ENCODE measurements at regions of chr9 and their contacts with region 1.

Region 1: DNA sequence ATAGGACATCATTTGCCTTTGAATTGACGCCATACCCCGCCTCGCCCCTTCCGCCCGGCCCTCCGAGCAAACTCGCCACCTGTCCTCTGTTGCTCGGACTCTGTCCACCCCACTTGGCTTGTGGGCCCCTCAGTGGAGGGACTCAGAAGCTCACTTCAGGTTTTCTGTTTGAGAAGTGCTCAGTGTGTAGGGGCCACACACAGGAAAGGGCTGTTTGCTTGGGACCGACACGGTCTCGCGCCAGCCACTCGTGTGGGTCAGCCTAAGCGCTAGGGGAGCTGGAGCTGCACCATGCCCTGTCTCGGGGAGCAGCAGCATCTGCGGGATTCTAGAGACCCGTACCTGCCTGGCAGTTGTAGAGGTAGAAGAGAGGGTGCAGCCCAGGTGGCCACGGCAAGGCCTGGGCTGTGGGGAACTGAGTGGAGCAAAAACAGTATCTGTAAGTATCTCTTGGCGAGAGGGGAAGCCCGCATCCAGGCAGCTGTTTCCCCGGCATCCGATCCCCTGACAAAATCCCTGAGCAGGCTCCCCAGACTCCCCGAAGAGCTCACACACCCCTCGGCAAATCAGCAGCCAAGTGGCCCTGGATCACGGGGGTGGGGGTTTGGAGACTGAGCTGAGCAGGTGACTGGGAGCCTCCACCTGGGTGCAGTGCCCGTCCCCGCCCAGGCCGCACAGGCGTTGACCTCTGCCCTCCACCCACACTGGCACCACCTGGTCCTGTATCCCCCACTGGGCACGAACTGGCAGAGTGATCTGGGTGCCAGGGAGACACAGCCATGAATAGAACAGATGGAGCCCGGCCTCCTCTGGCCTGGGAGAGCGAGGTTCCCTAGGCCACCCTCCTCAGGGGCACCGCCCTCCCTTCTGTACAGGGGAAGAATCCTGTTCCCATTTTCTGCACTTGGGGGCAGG is 52.3 kb downstream of the COL5A1 start:
- DNase-seq: peak in 1 of 2 donors; percentile 58
- H3K4me3 ChIP-seq: no peak overlapping the region
- H3K27ac ChIP-seq: peak overlapping the region in 1 of 2 donors; percentile 11
- H3K4me1 ChIP-seq: peaks cover 0 to 29% (median 17%) of the 10 kb centered on the region in 4 donors
- H3K27me3 ChIP-seq: no peaks in the 10 kb centered on the region
- CTCF ChIP-seq: no peak

Region 2: GRCh38 chr9:134738869-134739659 is 45.2 kb after region 1 on chr9:
- intact Hi-C with region 1: loop called (anchors 2 kb)
- DNase-seq: peak; percentile 70 to 84
- H3K4me3 ChIP-seq: no peak overlapping the region
- H3K27ac ChIP-seq: no peak overlapping the region
- H3K4me1 ChIP-seq: peaks cover 0 to 18% (median 2%) of the 10 kb centered on the region in 4 donors
- H3K27me3 ChIP-seq: no peaks in the 10 kb centered on the region
- CTCF ChIP-seq: peak; percentile 91 to 92

Region 3: GRCh38 chr9:134751622-134752021 is 57.7 kb after region 1 on chr9:
- intact Hi-C with region 1: no loop called
- DNase-seq: no peak
- H3K4me3 ChIP-seq: no peak overlapping the region
- H3K27ac ChIP-seq: no peak overlapping the region
- H3K4me1 ChIP-seq: no peaks in the 10 kb centered on the region
- H3K27me3 ChIP-seq: no peaks in the 10 kb centered on the region
- CTCF ChIP-seq: no peak

Measured in tibial artery (tissue), 4 donors.